ENCODE measurements at regions of chr12 and their contacts with region 1.

Region 1: GRCh38 chr12:92928962-92929915 is at the start of gene EEA1:
- DNase-seq: peak; percentile 98 to 99 (median 98)
- ATAC-seq: peak; percentile 94 to 96 (median 96)
- H3K4me3 ChIP-seq: peak within 1 kb of the TSS; percentile 62 to 94 (median 82)
- H3K27ac ChIP-seq: peak within 1 kb of the TSS; percentile 92 to 99 (median 98)
- H3K4me1 ChIP-seq: peaks cover 0 to 48% (median 25%) of the 10 kb centered on the region in 12 donors
- H3K27me3 ChIP-seq: no peaks in the 10 kb centered on the region
- CTCF ChIP-seq: peak in 8 of 12 donors; percentile 6 to 50 (median 30)
- POLR2A ChIP-seq: peak; percentile 72 to 95
- total RNA-seq, gene EEA1: 14.5 to 45.5 (median 29.9) TPM

Region 2: GRCh38 chr12:92802906-92803305 is 126.3 kb before region 1 on chr12:
- intact Hi-C with region 1: loop called in 1 of 10 experiments (anchors 10 kb)
- DNase-seq: no peak
- ATAC-seq: no peak
- H3K4me3 ChIP-seq: no peak overlapping the region
- H3K27ac ChIP-seq: peak overlapping the region in 3 of 12 donors; percentile 6 to 49 (median 45)
- H3K4me1 ChIP-seq: peaks cover 0 to 13% (median 4%) of the 10 kb centered on the region in 12 donors
- H3K27me3 ChIP-seq: no peaks in the 10 kb centered on the region
- CTCF ChIP-seq: no peak
- POLR2A ChIP-seq: no peak

Region 3: GRCh38 chr12:92859650-92860386 is 69.4 kb before region 1 on chr12:
- intact Hi-C with region 1: loop called in 1 of 10 experiments (anchors 5 kb)
- DNase-seq: no peak
- ATAC-seq: peak in 3 of 4 donors; percentile 42 to 53 (median 48)
- H3K4me3 ChIP-seq: no peak overlapping the region
- H3K27ac ChIP-seq: no peak overlapping the region
- H3K4me1 ChIP-seq: peaks cover 0 to 6% (median 0%) of the 10 kb centered on the region in 12 donors
- H3K27me3 ChIP-seq: no peaks in the 10 kb centered on the region
- CTCF ChIP-seq: no peak
- POLR2A ChIP-seq: no peak

Region 4: GRCh38 chr12:92879698-92880305 is 49.4 kb before region 1 on chr12:
- intact Hi-C with region 1: loop called in 1 of 10 experiments (anchors 10 kb)
- DNase-seq: no peak
- ATAC-seq: peak in 1 of 4 donors; percentile 31
- H3K4me3 ChIP-seq: no peak overlapping the region
- H3K27ac ChIP-seq: no peak overlapping the region
- H3K4me1 ChIP-seq: no peaks in the 10 kb centered on the region
- H3K27me3 ChIP-seq: no peaks in the 10 kb centered on the region
- CTCF ChIP-seq: no peak
- POLR2A ChIP-seq: no peak

Region 5: GRCh38 chr12:92955997-92956663 is 26.9 kb after region 1 on chr12:
- intact Hi-C with region 1: no loop called
- DNase-seq: no peak
- ATAC-seq: no peak
- H3K4me3 ChIP-seq: no peak overlapping the region
- H3K27ac ChIP-seq: no peak overlapping the region
- H3K4me1 ChIP-seq: no peaks in the 10 kb centered on the region
- H3K27me3 ChIP-seq: no peaks in the 10 kb centered on the region
- CTCF ChIP-seq: no peak
- POLR2A ChIP-seq: no peak

Region 6: DNA sequence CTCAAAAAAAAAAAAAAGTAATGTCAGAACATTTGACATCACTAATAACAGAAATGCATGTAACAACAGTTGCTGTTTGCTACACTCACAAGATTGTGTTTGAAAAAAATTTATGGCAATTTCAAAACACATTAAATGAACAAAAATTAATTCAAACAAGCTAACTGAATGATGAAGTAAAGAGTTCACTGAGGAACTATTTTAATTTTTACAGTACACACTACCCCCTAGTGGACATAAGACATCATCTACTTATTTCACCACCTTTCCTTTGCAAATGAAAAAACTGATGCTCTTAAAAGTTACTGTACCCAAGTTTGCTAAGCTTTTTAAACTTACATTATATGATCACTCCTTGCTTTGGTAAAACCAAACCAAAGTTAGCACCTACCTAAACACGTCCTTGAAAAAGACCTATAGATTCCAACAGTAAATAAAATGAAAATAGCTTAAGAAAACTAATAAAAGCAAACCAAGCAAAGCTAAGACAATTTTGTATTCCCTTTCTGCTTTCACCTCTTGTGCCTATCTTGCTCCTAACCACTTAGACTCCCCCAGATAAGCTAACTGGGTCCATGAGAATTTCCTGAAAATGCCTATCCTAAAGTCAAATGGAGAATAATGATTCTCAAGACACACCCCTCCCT is 490.3 kb after region 1 on chr12:
- intact Hi-C with region 1: loop called in 1 of 10 experiments (anchors 10 kb)
- DNase-seq: no peak
- ATAC-seq: peak in 3 of 4 donors; percentile 43 to 54 (median 43)
- H3K4me3 ChIP-seq: peak overlapping the region in 1 of 12 donors; percentile 4
- H3K27ac ChIP-seq: peak overlapping the region in 2 of 12 donors; percentile 25 to 41
- H3K4me1 ChIP-seq: peaks cover 0 to 80% (median 47%) of the 10 kb centered on the region in 12 donors
- H3K27me3 ChIP-seq: no peaks in the 10 kb centered on the region
- CTCF ChIP-seq: peak; percentile 57 to 78 (median 70)
- POLR2A ChIP-seq: no peak